Activated naive CD4-positive, alpha-beta T cell treated with anti-CD3 and anti-CD28 coated beads, Interleukin-2, amount 10 ng/mL, durations not matched to agents 7 days and 5 days (primary cell): ENCODE measurements at regions of chr2 and their contacts with region 1.

Region 1: DNA sequence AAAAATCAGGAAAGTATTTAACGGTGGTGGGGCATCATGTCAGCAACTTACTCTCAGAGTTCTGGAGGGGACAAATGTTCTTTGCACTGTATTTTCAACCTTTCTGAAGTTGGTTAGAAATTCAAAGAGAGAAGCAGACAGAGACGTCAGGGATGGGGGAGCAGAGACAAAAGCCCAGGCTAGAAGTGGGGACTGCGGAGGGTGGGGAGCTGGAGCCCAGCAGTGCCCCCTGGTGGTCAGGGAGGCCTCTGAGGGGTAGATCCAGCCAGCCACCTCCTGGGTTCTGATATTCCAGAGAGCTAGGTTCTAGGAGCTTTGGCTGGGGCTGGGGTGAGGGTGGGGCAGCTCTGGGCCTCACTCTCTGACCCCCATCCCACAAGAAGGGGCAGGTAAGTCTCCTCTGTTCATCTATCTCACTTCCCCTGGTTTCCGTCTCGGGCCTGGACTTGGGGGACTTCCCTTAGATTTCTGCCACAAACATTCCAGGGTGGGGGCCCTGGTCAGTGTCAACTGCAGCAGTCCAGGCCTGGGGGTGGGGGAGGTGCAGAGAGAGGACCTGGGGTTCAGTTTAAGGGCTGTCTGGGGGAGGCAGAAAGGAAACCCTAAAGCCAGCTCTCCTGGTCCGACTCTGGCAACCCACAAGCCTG is 8.9 kb downstream of the TNS1 start:
- DNase-seq: peak; percentile 69
- H3K4me3 Mint-ChIP-seq: no peak overlapping the region
- H3K27ac Mint-ChIP-seq: no peak overlapping the region
- H3K4me1 Mint-ChIP-seq: no peaks in the 10 kb centered on the region
- H3K27me3 Mint-ChIP-seq: peaks cover 17% of the 10 kb centered on the region

Region 2: DNA sequence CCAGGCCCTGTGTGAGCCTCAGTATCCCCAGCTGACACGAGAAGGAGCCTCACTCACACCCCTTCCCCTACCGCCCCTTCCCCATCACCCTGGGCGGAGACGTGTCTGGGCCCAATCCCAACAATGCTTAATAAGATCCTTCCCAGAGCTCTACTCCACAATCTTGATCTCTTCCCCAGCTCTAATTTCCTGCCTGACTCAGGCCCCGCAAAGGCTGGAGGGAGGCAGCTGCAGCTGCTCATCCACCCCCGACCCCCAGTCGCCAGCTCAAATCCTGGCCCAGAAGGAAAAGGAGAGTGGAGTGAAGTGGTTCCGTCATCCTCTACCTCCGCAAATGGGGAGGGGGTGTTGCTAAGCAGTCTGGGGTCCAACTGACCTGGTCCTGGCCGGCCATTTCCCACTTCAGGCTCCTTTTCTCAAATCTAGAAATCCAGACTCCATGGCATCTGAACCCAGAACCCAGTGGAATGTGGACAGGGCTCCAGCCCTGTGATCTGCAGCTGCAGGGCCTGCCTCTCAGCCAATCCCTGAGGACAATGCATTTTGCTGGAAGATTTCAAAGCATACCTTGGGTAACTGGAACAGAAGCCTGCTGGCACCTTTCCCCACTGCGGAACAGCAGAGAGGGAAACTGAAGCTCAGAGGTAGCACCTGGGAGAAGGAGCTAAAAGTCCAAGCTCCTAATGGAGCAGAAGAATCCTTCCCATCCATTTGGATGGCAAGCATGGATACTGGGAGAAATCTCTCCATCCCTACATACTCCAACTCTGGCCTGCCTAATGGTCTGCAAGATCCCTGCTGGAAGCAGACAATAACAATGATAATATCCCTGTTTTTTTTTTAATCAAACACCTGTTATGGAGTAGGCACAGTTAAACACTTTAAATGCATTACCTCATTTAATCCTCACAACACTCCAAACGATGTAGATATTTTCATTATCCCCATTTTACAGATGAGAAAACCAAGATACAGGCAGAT is 14.4 kb after region 1 on chr2:
- CTCF ChIA-PET with region 1: interaction called, 29 read pairs
- DNase-seq: no peak
- H3K4me3 Mint-ChIP-seq: no peak overlapping the region
- H3K27ac Mint-ChIP-seq: no peak overlapping the region
- H3K4me1 Mint-ChIP-seq: peaks cover 10% of the 10 kb centered on the region
- H3K27me3 Mint-ChIP-seq: peaks cover 78% of the 10 kb centered on the region